Mammary epithelial cell (primary cell): ENCODE measurements at regions of chr3 and their contacts with region 1.

Region 1: DNA sequence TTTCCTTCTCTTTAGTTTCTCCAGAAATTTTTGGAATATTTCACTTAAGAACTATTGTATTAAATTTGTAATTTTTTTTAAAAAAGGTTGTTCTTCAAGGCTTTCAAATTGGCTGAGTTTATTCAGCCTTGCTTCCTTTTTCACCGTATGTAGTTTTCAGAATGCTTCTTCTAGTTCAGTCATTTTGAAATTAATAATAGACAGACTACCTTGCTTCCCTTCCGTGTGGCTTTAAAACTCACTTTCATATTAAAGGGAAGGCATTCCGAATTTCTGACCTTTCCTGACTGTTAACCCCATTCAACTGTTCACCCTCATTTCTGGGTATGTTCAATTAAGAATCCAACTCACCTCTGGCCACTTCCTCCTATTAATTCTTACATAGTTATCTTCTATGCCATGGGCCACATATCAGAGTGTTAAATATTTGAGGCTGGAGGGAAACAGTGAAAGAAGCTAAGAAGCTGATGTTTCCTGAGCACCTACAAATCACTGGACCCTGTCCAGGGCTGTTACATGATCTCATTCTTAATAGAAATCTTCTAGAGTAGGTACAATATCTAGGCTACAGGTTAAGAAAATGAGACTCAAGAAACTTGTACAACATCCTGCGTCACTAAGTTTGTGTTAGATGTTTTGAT is 237.5 kb downstream of the P3H2 start:
- DNase-seq: no peak
- H3K4me3 ChIP-seq: no peak overlapping the region
- H3K27ac ChIP-seq: no peak overlapping the region
- H3K4me1 ChIP-seq: no peaks in the 10 kb centered on the region
- H3K27me3 ChIP-seq: no peaks in the 10 kb centered on the region
- CTCF ChIP-seq: no peak

Region 2: DNA sequence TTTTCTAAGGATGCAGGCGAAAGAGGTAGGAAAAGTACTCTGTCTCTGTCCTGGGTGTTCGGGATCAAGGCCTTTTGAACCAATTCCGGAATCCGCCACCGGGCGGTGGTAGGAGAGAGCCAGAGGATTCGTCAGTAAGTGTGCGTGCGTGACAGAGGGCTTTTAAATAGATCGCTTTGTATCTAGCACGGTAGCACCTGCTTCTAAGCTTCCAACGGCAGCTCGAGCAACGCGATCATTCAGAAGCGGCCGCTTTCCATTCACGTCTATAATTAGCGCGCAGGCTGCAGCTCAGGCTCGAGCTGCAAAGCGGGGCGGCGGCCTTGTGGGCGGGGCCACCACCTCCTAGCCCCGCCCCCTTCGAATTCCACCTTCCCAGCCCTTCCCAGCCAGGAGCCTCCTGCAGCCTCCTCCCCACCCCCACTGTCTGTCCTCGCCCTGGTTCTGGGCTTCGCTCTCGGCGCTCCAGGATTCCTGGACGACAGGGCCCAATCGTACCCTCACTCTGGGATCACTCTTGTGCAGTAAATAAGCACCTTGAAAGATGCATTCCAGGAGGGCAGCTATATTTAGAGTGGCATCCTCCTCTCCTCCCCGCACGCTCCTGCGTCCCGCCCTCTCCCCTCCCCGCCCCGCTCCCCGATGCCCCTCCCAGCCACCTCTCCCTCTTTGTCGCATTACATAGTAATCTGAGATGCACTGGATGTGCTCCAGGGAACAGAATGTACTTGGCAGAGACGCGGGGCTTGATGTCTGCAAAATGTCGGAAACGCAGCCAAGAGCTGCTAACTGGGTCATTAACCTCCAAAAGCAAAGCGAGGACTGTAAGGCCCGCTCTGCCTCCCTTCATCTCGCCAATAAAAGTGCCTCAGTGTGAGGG is 935.6 kb before region 1 on chr3:
- CTCF ChIA-PET with region 1: no interaction called
- dilution Hi-C with region 1: no loop called
- in situ Hi-C with region 1: no loop called
- intact Hi-C with region 1: no loop called
- DNase-seq: peak; percentile 85
- H3K4me3 ChIP-seq: peak overlapping the region; percentile 23 to 47 (median 43)
- H3K27ac ChIP-seq: peak overlapping the region; percentile 86
- H3K4me1 ChIP-seq: peaks cover 37% of the 10 kb centered on the region
- H3K27me3 ChIP-seq: no peaks in the 10 kb centered on the region
- CTCF ChIP-seq: peak; percentile 31 to 53

Region 3: DNA sequence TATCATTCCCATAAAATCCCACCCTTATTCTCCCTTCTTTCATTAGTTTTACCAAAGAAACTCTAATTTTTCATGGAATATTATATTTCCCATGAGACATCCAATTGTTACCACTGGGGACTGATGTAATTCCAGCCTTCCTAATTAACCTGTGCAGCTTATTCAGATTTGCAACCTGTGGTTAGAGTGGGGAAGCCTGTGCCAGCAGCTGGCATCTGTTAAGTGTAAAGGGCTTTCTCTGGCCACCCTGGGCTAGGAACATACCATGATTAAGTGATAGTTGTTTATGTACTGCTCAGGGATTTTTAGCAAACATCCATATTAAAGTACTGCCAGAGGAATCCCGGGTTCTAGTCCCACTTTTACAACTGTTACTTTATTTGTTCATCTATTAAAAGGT is 633.2 kb before region 1 on chr3:
- CTCF ChIA-PET with region 1: no interaction called
- dilution Hi-C with region 1: no loop called
- in situ Hi-C with region 1: no loop called
- intact Hi-C with region 1: no loop called
- DNase-seq: no peak
- H3K4me3 ChIP-seq: no peak overlapping the region
- H3K27ac ChIP-seq: no peak overlapping the region
- H3K4me1 ChIP-seq: no peaks in the 10 kb centered on the region
- H3K27me3 ChIP-seq: no peaks in the 10 kb centered on the region
- CTCF ChIP-seq: no peak

Region 4: GRCh38 chr3:189813647-189814240 is 69.5 kb before region 1 on chr3:
- CTCF ChIA-PET with region 1: no interaction called
- dilution Hi-C with region 1: no loop called
- in situ Hi-C with region 1: no loop called
- intact Hi-C with region 1: loop called (anchors 5 kb)
- DNase-seq: no peak
- H3K4me3 ChIP-seq: no peak overlapping the region
- H3K27ac ChIP-seq: no peak overlapping the region
- H3K4me1 ChIP-seq: no peaks in the 10 kb centered on the region
- H3K27me3 ChIP-seq: no peaks in the 10 kb centered on the region
- CTCF ChIP-seq: no peak

Region 5: GRCh38 chr3:189871418-189871817 is 11.8 kb before region 1 on chr3:
- CTCF ChIA-PET with region 1: no interaction called
- dilution Hi-C with region 1: no loop called
- in situ Hi-C with region 1: no loop called
- intact Hi-C with region 1: no loop called
- DNase-seq: no peak
- H3K4me3 ChIP-seq: no peak overlapping the region
- H3K27ac ChIP-seq: no peak overlapping the region
- H3K4me1 ChIP-seq: no peaks in the 10 kb centered on the region
- H3K27me3 ChIP-seq: no peaks in the 10 kb centered on the region
- CTCF ChIP-seq: no peak